Ovary (tissue), 10 donors: ENCODE measurements at regions of chr7 and their contacts with region 1.

Region 1: GRCh38 chr7:148884299-148885022 is 370 bp upstream of the EZH2 start:
- DNase-seq: peak; percentile 90 to 97 (median 94)
- H3K4me3 ChIP-seq: peak overlapping the region; percentile 95
- H3K27ac ChIP-seq: peak overlapping the region; percentile 85 to 93
- H3K4me1 ChIP-seq: peaks cover 4% of the 10 kb centered on the region
- H3K27me3 ChIP-seq: no peaks in the 10 kb centered on the region
- CTCF ChIP-seq: no peak
- EP300 ChIP-seq: no peak
- POLR2A ChIP-seq: peak; percentile 90

Region 2: GRCh38 chr7:148515716-148516695 is 368.5 kb before region 1 on chr7:
- intact Hi-C with region 1: no loop called
- DNase-seq: no peak
- H3K4me3 ChIP-seq: no peak overlapping the region
- H3K27ac ChIP-seq: no peak overlapping the region
- H3K4me1 ChIP-seq: no peaks in the 10 kb centered on the region
- H3K27me3 ChIP-seq: no peaks in the 10 kb centered on the region
- CTCF ChIP-seq: no peak
- EP300 ChIP-seq: no peak
- POLR2A ChIP-seq: no peak

Region 3: DNA sequence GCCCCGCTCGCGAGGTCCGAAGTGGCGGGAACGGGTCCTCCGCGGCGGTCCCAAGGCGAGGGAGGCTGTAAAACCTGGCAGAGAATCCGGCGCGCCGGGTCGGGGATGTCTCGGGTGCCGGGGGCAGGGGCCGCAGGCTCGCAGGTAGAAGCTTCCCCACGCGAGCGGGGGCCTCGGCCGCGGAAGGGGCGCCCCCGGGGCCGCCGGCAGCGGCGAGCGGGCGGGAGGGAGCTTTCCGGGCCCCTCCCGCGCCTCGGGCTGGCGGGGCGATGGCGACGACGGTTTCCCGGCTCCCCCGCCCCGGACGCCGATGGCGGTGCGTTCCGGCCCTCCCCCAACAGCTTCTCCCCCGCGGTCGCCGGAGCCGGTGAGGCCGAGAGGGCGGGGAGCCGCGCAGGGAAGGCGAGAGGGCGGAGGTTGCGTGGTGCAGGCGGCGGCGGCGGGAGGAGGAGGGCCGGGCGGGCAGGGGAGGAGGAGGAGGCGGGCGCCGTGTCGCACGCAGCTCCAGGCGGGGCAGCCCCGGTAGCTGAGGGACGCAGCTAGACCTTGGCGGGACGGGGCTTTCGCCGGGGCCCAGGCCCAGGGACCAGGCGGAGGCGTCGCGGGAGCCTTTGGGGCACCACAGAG is 186.0 kb before region 1 on chr7 and contains the start of gene CUL1:
- intact Hi-C with region 1: loop called in 1 of 4 experiments (anchors 10 kb)
- DNase-seq: peak; percentile 80 to 86 (median 82)
- H3K4me3 ChIP-seq: peak within 1 kb of the TSS; percentile 73
- H3K27ac ChIP-seq: peak within 1 kb of the TSS; percentile 99 to 100
- H3K4me1 ChIP-seq: peaks cover 13% of the 10 kb centered on the region
- H3K27me3 ChIP-seq: no peaks in the 10 kb centered on the region
- CTCF ChIP-seq: no peak
- EP300 ChIP-seq: no peak
- POLR2A ChIP-seq: peak; percentile 54
- total RNA-seq, gene CUL1: 35.7 to 51.3 (median 40.2) TPM

Region 4: GRCh38 chr7:148940702-148941597 is 56.5 kb after region 1 on chr7:
- intact Hi-C with region 1: loop called in 2 of 4 experiments (anchors 2 to 5 kb)
- DNase-seq: peak; percentile 79 to 85 (median 82)
- H3K4me3 ChIP-seq: peak overlapping the region; percentile 80
- H3K27ac ChIP-seq: peak overlapping the region; percentile 87 to 89
- H3K4me1 ChIP-seq: no peaks in the 10 kb centered on the region
- H3K27me3 ChIP-seq: no peaks in the 10 kb centered on the region
- CTCF ChIP-seq: no peak
- EP300 ChIP-seq: no peak
- POLR2A ChIP-seq: peak; percentile 50